BJ (cell line): ENCODE measurements at regions of chr2 and their contacts with region 1.

Region 1: DNA sequence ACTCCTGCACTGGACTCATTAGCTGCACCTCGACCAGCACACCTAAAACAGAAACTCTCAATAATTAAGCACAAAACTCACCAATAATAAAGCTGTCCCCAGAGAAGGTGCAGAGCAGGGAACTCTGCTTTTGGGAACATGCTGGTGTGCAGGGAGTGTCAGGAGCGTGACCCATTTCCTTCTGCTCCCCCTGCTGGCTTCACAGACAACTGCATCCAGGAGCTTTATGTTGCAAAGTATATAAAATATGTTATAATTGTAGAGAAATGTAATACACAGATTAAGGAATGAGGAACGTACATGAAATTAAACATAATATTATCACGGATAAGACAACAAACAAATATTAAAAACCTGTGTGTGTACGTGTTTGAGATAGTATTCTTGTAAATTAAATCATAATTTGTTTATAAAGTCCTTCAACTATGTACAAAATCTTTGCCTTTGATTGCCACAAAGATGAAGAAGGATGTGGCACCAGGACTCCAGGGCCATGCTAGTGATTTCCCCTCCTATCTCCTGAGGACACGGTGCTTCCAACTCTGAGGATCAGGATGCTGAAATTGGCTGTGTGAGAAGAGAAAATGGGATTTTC is 68.6 kb upstream of the MAL start:
- DNase-seq: no peak
- H3K4me3 ChIP-seq: no peak overlapping the region
- H3K27me3 ChIP-seq: peaks cover 1% of the 10 kb centered on the region
- CTCF ChIP-seq: peak; percentile 91

Region 2: DNA sequence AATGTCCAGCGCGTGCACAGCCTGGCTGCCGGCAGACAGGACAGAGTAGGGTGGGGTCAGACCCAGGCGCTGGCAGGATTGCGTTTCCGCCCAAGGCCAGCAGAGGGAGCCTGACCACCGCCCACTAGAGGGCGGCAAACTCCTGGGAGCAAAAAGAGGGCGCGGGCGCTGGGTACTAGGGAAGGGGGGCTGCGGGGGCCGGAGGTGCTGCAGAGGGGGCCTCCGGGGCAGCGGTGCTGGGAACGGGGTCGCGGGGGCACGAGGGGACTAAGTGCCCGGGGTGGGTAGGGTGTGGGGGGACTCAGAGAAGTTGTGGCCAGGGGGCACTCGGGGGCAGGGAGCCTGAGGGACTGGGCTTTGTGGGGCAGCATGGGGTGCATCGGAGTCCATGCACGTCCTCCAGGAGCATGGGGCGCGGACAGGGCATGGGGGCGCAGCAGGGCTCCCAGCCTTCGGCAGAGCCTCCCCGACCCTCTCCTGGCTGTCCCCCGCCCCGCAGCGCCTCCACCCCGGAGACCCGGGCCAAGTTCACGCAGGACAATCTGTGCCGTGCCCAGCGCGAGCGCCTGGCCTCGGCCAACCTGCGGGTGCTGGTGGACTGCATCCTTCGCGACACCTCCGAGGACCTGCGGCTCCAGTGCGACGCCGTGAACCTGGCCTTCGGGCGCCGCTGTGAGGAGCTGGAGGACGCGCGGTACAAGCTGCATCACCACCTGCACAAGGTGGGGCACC is 82.5 kb before region 1 on chr2:
- CTCF ChIA-PET with region 1: interaction called, 14 read pairs
- POLR2A ChIA-PET with region 1: no interaction called
- DNase-seq: no peak
- H3K4me3 ChIP-seq: no peak overlapping the region
- H3K27me3 ChIP-seq: peaks cover 2% of the 10 kb centered on the region; the same call in 1 of the 2 replicates
- CTCF ChIP-seq: peak; percentile 99

Region 3: DNA sequence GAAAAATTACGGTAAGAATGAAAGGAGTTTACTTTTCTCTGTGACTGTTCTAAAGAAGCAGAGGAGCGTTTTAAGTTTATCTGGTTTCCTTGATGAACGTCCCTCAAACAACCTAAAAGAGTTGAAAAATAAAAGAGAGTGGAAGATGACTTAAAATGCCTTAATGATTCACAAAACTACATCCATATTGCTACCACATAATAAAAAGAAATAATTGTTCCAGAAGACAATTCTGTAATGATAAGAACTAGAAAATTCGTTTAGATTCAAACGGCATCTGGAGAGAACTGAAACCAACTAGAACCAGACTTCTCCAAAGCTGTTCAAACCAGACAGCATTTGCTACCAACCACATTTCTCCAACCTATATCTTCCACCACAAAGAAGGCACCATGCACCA is 17.5 kb before region 1 on chr2:
- CTCF ChIA-PET with region 1: interaction called, 24 read pairs
- POLR2A ChIA-PET with region 1: no interaction called
- DNase-seq: no peak
- H3K4me3 ChIP-seq: no peak overlapping the region
- H3K27me3 ChIP-seq: no peaks in the 10 kb centered on the region
- CTCF ChIP-seq: no peak

Region 4: DNA sequence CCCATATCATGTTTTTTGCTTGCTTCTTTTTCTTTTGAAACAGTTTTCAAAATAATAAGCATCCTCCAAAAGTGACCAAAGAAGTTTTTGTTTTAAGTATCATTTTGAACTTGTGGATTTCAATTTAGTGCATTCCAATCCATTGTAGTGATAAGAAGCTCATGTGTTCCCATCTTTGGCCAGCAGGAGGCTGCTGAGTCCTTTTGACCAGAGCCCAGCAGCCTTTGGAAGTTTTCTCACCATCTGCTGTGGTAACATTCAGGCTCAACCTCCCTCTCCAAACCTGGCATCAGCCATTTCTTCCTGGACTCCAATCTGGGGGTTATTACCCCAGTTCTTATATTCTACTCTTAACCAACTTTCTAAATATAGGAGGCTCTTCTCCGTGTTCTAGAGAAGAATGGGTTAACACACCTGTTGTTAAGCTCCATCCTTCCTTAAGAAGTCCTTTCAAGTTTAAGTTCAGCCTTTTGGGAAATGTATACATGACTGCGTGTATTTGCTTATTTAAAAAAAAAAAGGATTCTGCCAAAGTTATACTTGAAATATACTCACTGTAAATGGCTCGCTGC is 29.6 kb after region 1 on chr2:
- CTCF ChIA-PET with region 1: interaction called, 11 read pairs
- POLR2A ChIA-PET with region 1: no interaction called
- DNase-seq: peak; percentile 4
- H3K4me3 ChIP-seq: no peak overlapping the region
- H3K27me3 ChIP-seq: peaks cover 4% of the 10 kb centered on the region
- CTCF ChIP-seq: peak; percentile 82